Endothelial cell of umbilical vein (primary cell): ENCODE measurements at regions of chr17 and their contacts with region 1.

Region 1: GRCh38 chr17:27879987-27880608 is 13.1 kb downstream of the LYRM9 start:
- DNase-seq: peak; percentile 60
- H3K4me3 ChIP-seq: no peak overlapping the region
- H3K27ac ChIP-seq: no peak overlapping the region
- H3K4me1 ChIP-seq: no peaks in the 10 kb centered on the region
- H3K27me3 ChIP-seq: no peaks in the 10 kb centered on the region
- CTCF ChIP-seq: peak; percentile 91 to 93
- POLR2A ChIP-seq: no peak

Region 2: DNA sequence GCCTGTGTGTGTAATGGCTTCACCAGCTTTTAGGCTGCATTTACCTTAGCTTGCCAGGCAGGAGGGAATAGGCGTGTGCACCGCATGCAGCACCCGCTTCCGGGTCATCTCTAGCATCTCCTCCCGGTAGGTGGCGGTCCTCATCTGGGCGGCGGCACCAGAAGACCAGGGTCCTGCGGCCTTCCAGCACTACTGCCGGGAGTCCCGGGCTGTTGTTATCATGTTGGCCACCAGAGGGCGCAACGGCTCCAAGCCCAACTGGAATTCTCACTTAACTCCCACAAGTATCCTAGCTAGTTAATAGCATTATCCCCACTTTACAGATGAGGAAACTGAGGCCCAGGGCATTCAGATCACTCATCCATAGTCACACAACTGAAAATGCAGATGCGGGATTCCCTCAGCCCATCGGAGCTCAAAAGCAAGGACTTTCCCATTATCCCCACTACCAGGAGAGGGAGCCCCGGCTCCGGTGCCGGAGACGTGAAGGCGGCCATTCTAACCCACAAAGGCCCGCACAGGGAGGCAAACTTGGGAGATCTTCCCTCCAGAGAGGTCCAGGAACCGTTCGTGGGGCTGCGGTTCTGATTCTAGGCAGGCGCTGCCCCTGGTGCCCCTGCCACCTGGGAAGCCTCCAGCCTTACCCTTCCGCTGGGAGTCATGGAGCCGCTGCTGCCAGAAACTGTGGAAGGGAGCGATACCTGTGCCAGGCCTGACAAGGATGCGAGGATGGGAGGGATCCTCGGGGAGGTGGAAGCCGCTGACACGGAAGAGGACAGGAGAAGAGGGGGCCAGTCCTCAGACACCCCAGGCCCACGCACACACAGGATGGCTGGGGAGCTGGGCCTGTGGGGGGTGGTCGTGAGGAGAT is 225.2 kb before region 1 on chr17:
- CTCF ChIA-PET with region 1: interaction called, 34 read pairs
- POLR2A ChIA-PET with region 1: interaction called, 3 read pairs
- dilution Hi-C with region 1: no loop called
- intact Hi-C with region 1: no loop called
- DNase-seq: peak; percentile 66
- H3K4me3 ChIP-seq: no peak overlapping the region
- H3K27ac ChIP-seq: no peak overlapping the region
- H3K4me1 ChIP-seq: no peaks in the 10 kb centered on the region
- H3K27me3 ChIP-seq: no peaks in the 10 kb centered on the region
- CTCF ChIP-seq: peak; percentile 77 to 91
- POLR2A ChIP-seq: no peak

Region 3: GRCh38 chr17:27760069-27760885 is 119.8 kb before region 1 on chr17:
- CTCF ChIA-PET with region 1: interaction called, 286 read pairs
- POLR2A ChIA-PET with region 1: no interaction called
- dilution Hi-C with region 1: no loop called
- intact Hi-C with region 1: loop called (anchors 1 kb)
- DNase-seq: peak; percentile 38
- H3K4me3 ChIP-seq: no peak overlapping the region
- H3K27ac ChIP-seq: no peak overlapping the region
- H3K4me1 ChIP-seq: no peaks in the 10 kb centered on the region
- H3K27me3 ChIP-seq: no peaks in the 10 kb centered on the region
- CTCF ChIP-seq: peak; percentile 75 to 84
- POLR2A ChIP-seq: no peak

Region 4: GRCh38 chr17:27768858-27769410 is 111.2 kb before region 1 on chr17:
- CTCF ChIA-PET with region 1: interaction called, 16 read pairs
- POLR2A ChIA-PET with region 1: no interaction called
- dilution Hi-C with region 1: no loop called
- intact Hi-C with region 1: no loop called
- DNase-seq: no peak
- H3K4me3 ChIP-seq: no peak overlapping the region
- H3K27ac ChIP-seq: no peak overlapping the region
- H3K4me1 ChIP-seq: no peaks in the 10 kb centered on the region
- H3K27me3 ChIP-seq: no peaks in the 10 kb centered on the region
- CTCF ChIP-seq: no peak
- POLR2A ChIP-seq: no peak

Region 5: GRCh38 chr17:27797390-27798091 is 82.6 kb before region 1 on chr17:
- CTCF ChIA-PET with region 1: interaction called, 545 read pairs
- POLR2A ChIA-PET with region 1: no interaction called
- dilution Hi-C with region 1: no loop called
- intact Hi-C with region 1: no loop called
- DNase-seq: no peak
- H3K4me3 ChIP-seq: no peak overlapping the region
- H3K27ac ChIP-seq: no peak overlapping the region
- H3K4me1 ChIP-seq: no peaks in the 10 kb centered on the region
- H3K27me3 ChIP-seq: peaks cover 23 to 32% of the 10 kb centered on the region in 2 experiments
- CTCF ChIP-seq: no peak
- POLR2A ChIP-seq: no peak

Region 6: DNA sequence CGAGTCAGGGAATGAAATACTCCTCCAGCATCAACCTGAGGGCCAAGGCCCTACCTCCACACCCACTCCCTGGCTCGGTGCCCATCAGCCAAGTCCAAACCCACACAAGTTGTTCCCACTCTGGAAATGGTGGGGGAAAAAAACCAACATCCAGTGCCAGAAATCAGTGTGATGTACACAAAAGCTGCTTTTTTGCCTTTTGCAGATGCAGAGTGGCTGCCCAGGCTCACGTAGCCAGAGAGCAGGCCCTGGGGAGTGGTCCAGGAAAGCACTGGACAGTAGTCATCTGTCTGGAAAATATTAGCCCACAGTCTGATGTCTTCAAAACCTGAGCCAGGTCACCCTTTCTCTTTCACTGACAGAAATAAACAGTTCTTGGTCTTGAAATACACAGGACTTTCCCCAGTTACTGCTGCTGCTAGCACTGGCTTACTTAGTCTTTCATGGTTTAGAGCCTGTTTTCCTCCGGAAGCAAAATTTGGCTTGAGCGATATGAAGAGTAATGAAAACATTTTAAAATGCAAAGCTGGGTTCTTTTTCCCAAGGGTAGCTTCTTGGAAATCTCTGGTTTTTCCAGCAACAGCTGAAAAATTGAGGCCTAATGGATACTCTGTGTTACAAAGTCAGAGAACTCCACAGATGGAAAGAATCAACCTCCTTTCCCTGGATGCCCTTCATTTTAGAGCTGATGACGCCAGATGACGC is 61.5 kb before region 1 on chr17:
- CTCF ChIA-PET with region 1: interaction called, 6 read pairs
- POLR2A ChIA-PET with region 1: interaction called, 11 read pairs
- dilution Hi-C with region 1: no loop called
- intact Hi-C with region 1: no loop called
- DNase-seq: peak; percentile 40
- H3K4me3 ChIP-seq: no peak overlapping the region
- H3K27ac ChIP-seq: peak overlapping the region; percentile 49
- H3K4me1 ChIP-seq: peaks cover 19% of the 10 kb centered on the region
- H3K27me3 ChIP-seq: no peaks in the 10 kb centered on the region
- CTCF ChIP-seq: no peak
- POLR2A ChIP-seq: no peak

Region 7: DNA sequence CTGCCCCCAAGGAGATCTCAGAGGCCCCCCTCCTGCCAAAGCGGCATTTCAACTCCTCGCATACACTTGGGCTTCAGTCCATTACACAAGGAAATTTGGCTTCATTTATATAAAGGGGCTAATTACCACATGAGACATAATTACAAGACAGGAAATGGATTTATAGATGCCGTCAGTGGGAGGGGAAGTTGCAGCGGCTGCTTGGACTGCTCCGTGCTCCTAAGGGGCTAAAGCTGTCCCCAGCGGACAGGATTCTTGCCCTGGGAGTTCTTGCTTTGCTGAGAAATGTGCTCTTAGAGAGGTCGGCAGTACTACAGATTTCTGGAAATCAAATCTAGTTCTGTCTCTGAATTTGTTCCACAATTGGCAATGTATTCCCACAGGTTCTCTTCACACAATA is 105.2 kb after region 1 on chr17:
- CTCF ChIA-PET with region 1: no interaction called
- POLR2A ChIA-PET with region 1: no interaction called
- dilution Hi-C with region 1: no loop called
- intact Hi-C with region 1: no loop called
- DNase-seq: peak; percentile 72
- H3K4me3 ChIP-seq: no peak overlapping the region
- H3K27ac ChIP-seq: peak overlapping the region; percentile 49
- H3K4me1 ChIP-seq: peaks cover 69% of the 10 kb centered on the region
- H3K27me3 ChIP-seq: no peaks in the 10 kb centered on the region
- CTCF ChIP-seq: no peak
- POLR2A ChIP-seq: no peak